ENCODE measurements at regions of chr13 and their contacts with region 1.

Region 1: GRCh38 chr13:111161601-111162600 is 46.8 kb downstream of the ARHGEF7 start:
- DNase-seq: no peak
- ATAC-seq: no peak
- H3K4me3 ChIP-seq: no peak overlapping the region
- H3K27ac ChIP-seq: no peak overlapping the region
- H3K4me1 ChIP-seq: peaks cover 0 to 57% (median 15%) of the 10 kb centered on the region in 12 donors
- H3K27me3 ChIP-seq: no peaks in the 10 kb centered on the region
- CTCF ChIP-seq: no peak
- POLR2A ChIP-seq: no peak

Region 2: GRCh38 chr13:111005364-111005763 is 156.5 kb before region 1 on chr13:
- intact Hi-C with region 1: no loop called
- DNase-seq: peak in 1 of 5 donors; percentile 47
- ATAC-seq: peak in 2 of 4 donors; percentile 46 to 56
- H3K4me3 ChIP-seq: peak overlapping the region in 3 of 12 donors; percentile 1 to 15 (median 1)
- H3K27ac ChIP-seq: peak overlapping the region; percentile 70 to 93 (median 88)
- H3K4me1 ChIP-seq: peaks cover 3 to 36% (median 23%) of the 10 kb centered on the region in 12 donors
- H3K27me3 ChIP-seq: no peaks in the 10 kb centered on the region
- CTCF ChIP-seq: no peak
- POLR2A ChIP-seq: no peak

Region 3: DNA sequence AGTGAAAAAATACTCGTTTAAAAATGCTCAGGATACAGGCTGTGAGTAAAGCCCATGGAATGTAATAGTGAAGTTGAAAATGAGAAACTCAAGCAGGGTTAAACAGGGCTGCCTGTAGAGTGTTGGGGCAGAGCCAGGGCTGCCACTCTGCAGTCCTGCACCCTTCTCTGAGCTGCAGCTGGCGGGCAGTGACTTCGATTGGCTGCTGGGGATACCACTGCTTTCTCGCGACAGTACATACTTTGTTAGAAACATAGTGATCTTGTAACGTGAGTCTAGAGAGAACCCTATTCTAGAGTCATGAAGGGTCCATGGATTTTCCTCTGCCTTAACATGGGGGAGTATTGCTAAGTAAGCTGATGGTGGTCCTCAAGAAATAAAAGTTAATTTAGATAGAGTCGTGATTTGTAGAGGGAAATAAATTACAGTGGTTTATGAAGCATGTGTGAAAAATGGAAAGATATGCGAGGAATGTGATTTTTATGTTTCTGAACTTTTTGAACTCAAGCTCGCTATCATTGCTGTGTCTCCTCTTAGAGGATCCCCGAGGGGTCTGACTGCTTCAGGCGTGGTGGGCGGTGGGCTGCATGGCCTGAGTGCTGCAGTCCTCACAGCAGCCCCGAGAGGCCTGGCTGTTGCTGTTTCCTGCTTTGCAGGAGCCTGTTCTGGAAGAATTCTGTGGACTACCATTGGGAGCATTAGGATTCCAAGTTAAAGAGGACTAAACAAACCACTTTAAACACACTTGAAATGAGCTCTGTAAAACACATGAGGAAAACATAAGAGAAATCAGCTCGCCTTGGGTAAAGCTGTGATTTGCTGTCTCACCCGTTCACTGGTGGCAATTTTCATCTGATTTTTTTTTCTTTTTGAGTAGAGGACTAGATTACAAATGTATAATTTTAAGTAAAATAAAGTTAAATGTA is 48.9 kb after region 1 on chr13:
- intact Hi-C with region 1: loop called in 1 of 10 experiments (anchors 5 kb)
- DNase-seq: peak in 2 of 5 donors; percentile 53 to 66
- ATAC-seq: peak; percentile 48 to 80 (median 66)
- H3K4me3 ChIP-seq: peak overlapping the region in 5 of 12 donors; percentile 3 to 25 (median 12)
- H3K27ac ChIP-seq: peak overlapping the region in 7 of 12 donors; percentile 0 to 56 (median 18)
- H3K4me1 ChIP-seq: peaks cover 3 to 86% (median 73%) of the 10 kb centered on the region in 12 donors
- H3K27me3 ChIP-seq: no peaks in the 10 kb centered on the region
- CTCF ChIP-seq: no peak
- POLR2A ChIP-seq: no peak

Measured in heart left ventricle (tissue), 16 donors.